ENCODE measurements at regions of chr16 and their contacts with region 1.

Region 1: DNA sequence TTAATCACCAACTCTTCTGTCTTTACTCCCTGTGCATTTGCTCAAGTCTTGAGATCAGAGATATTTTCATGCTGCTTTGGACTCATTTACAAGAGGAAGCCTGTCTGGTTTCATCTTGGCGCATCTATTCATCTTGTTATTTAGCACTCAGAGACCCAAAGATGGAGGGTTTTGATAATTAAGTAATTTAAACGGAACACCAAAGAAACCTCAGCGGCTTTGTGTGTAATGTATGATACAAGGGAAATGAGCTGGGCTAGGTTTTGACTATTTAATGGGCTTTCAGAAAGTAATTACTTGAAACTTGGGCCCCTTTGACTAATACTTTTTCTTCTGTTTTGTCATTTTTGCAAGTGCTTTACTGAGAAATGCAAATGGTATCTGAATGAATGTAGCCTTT is 66.2 kb upstream of the CACNG3 start:
- DNase-seq: no peak
- H3K4me3 Mint-ChIP-seq: peak overlapping the region; percentile 27
- H3K27ac Mint-ChIP-seq: peak overlapping the region; percentile 97
- H3K4me1 Mint-ChIP-seq: peaks cover 44% of the 10 kb centered on the region
- H3K27me3 Mint-ChIP-seq: no peaks in the 10 kb centered on the region

Region 2: DNA sequence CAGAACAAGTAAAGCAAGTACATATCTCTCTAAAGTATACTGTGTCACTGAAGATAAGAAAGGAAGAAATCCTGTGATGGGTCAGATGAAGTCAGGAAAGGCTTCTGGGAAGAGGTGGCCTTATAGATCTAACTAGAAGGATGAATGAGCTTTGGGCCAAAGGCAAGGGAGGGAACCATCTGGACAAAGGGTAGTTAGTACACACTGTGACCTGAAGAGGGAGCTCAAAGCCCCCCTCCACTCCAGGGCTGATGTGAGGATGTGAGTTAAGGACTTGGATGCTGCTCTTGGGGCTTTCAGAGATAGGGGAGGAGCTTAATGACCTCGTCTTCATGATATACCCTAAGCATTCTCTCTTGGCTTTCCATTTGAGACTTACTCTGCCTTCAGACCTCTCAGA is 119.1 kb before region 1 on chr16:
- intact Hi-C with region 1: loop called (anchors 2 kb)
- DNase-seq: no peak
- H3K4me3 Mint-ChIP-seq: no peak overlapping the region
- H3K27ac Mint-ChIP-seq: no peak overlapping the region
- H3K4me1 Mint-ChIP-seq: peaks cover 20% of the 10 kb centered on the region
- H3K27me3 Mint-ChIP-seq: no peaks in the 10 kb centered on the region

Region 3: GRCh38 chr16:24151482-24151939 is 38.4 kb before region 1 on chr16:
- intact Hi-C with region 1: loop called (anchors 1 kb)
- DNase-seq: no peak
- H3K4me3 Mint-ChIP-seq: no peak overlapping the region
- H3K27ac Mint-ChIP-seq: peak overlapping the region; percentile 77
- H3K4me1 Mint-ChIP-seq: peaks cover 21% of the 10 kb centered on the region
- H3K27me3 Mint-ChIP-seq: no peaks in the 10 kb centered on the region

Region 4: DNA sequence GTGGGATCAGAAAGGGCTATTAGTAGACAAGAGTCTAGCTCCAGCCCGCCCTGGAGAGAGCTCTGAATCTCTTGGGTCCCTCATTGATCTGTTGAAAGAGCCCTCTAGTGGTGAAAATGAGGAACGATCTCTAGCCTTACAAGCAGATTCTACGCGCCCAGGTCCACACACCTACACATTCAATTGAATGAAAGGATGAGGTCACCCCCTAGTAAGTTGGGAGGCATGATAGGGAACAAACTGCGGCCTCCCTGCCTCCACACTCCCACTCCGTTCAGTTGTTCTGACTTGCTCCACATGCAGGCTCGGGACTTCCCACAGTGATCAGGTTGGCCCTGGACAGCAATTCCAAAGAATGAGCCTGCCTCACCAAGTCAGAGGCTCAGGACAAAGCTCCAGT is 63.3 kb after region 1 on chr16:
- intact Hi-C with region 1: loop called (anchors 5 kb)
- DNase-seq: peak; percentile 12
- H3K4me3 Mint-ChIP-seq: no peak overlapping the region
- H3K27ac Mint-ChIP-seq: no peak overlapping the region
- H3K4me1 Mint-ChIP-seq: peaks cover 4% of the 10 kb centered on the region
- H3K27me3 Mint-ChIP-seq: peaks cover 40% of the 10 kb centered on the region

Measured in activated T-helper 2 cell treated with anti-CD3 and anti-CD28 coated beads, Interferon-gamma antibody, Interleukin-2, Interleukin-4, amounts not matched to agents 10 μg/mL and 5 μg/mL and 100 μg/mL, durations not matched to agents 14 hours and 24 hours and 36 hours (primary cell).